ENCODE measurements at regions of chr1 and their contacts with region 1.

Region 1: DNA sequence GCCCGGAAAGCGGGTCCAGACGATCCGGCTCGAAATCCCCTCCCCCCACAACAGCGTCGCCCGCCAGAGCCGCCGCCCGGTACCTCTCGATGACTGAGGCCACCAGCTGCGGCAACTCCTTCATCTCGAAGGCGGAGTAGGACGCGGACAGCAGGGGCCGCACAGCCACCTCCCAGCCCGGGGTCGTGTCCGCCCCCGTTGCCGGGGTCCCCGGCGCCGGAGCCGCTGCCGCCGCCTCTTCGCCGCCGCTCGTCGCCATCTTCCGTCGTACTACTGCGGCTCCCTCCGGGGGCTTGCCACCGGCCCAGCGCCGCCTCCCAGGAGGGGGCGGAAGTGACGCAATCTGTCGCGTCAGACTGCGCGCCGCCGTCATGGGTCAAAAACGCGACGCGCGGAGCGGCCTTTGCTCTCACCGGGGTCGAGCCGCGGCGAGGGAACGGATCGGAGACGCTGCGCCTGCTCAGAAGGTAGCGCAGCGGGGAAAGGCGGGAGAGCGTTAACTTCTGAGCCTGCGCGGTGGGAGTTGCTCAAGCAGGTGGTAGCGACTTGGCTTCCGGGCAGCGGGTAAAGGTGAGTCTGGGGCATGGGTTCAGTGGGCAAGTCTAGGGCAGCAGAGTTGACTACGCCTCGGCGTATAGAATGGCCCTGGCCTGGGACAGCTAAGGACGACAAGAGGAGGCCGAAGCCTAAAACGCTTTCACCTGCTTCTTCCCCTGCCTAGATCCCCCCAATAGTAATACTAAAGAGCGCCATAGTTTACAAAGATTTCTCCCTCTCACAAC is at the start of gene UBR4:
- DNase-seq: peak; percentile 98
- H3K4me3 ChIP-seq: peak within 1 kb of the TSS; percentile 67 to 94 (median 84)
- H3K27ac ChIP-seq: peak within 1 kb of the TSS; percentile 95 to 98 (median 96)
- H3K4me1 ChIP-seq: peaks cover 0 to 60% (median 50%) of the 10 kb centered on the region in 4 donors
- H3K27me3 ChIP-seq: no peaks in the 10 kb centered on the region
- CTCF ChIP-seq: no peak
- EP300 ChIP-seq: peak in 1 of 4 donors; percentile 89
- POLR2A ChIP-seq: peak; percentile 82 to 93
- total RNA-seq, gene UBR4: 64.3 to 215 (median 85.5) TPM

Region 2: GRCh38 chr1:19029191-19030105 is 180.7 kb before region 1 on chr1:
- intact Hi-C with region 1: no loop called
- DNase-seq: no peak
- H3K4me3 ChIP-seq: no peak overlapping the region
- H3K27ac ChIP-seq: no peak overlapping the region
- H3K4me1 ChIP-seq: peaks cover 0 to 11% (median 4%) of the 10 kb centered on the region in 4 donors
- H3K27me3 ChIP-seq: no peaks in the 10 kb centered on the region
- CTCF ChIP-seq: no peak
- EP300 ChIP-seq: no peak
- POLR2A ChIP-seq: no peak

Region 3: GRCh38 chr1:19156676-19157075 is 53.5 kb before region 1 on chr1:
- intact Hi-C with region 1: no loop called
- DNase-seq: peak; percentile 76
- H3K4me3 ChIP-seq: no peak overlapping the region
- H3K27ac ChIP-seq: peak overlapping the region in 1 of 4 donors; percentile 46
- H3K4me1 ChIP-seq: no peaks in the 10 kb centered on the region
- H3K27me3 ChIP-seq: no peaks in the 10 kb centered on the region
- CTCF ChIP-seq: no peak
- EP300 ChIP-seq: no peak
- POLR2A ChIP-seq: no peak

Region 4: DNA sequence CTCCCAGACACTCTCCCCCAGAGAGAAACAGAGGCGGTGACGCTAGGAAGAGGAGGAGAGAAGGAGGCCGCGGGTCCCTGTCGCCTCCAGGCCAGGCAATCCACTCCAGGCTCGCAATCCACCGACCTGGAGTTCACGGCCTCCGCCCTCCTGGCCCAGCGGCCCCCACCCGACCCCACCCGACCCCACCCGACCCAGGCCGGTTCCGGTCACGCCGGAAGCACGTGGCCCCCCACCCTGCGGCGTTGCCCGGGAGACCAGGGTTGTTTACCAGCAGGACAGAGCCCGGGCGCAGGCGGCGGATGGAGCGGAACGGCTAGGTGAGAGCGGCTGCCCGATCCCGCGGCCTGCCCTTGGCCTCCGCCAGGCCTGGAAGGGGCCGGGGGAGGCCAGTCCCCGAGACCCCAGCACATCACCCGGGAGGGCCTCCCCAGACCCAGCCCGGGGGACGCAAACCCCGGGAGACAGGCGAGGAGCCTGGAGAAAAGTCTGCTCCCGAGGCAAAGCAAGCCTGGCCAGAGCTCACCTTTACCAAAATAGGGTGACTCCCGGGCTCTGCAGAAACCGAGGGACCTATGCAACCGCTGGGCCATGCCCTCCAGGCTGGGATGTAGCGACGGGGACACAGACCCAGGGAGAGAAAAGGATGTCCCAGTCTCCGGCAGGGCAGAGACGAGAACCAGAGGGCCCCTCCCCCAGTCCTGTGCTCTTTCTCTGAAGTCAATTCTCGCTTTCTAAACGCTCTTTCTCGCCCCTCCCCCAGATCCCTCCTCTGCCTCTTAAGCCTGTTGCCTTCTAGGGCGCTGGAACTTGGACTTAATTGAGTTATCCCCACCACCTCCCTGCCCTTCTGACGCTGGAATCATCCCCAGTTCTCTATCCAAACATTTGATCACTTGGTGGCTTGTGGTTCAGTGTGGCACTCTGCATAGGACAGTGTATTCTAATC is 975.9 kb after region 1 on chr1 and contains the starts of genes PLA2G2C and UBXN10:
- intact Hi-C with region 1: loop called (anchors 10 kb)
- DNase-seq: peak; percentile 95
- H3K4me3 ChIP-seq: peak within 1 kb of the TSS; percentile 60 to 77 (median 68)
- H3K27ac ChIP-seq: peak within 1 kb of the TSS; percentile 85 to 99 (median 96)
- H3K4me1 ChIP-seq: peaks cover 0 to 85% (median 74%) of the 10 kb centered on the region in 4 donors
- H3K27me3 ChIP-seq: no peaks in the 10 kb centered on the region
- CTCF ChIP-seq: no peak
- EP300 ChIP-seq: peak in 3 of 4 donors; percentile 32 to 58 (median 38)
- POLR2A ChIP-seq: peak in 1 of 2 donors; percentile 45
- total RNA-seq, gene PLA2G2C: 0.82 to 5.5 (median 1.5) TPM
- total RNA-seq, gene UBXN10: 14.6 to 25.0 (median 23.1) TPM